HCT116 (cell line): ENCODE measurements at regions of chr5 and their contacts with region 1.

Region 1: GRCh38 chr5:175378444-175379028 is 65.4 kb downstream of the DRD1 start:
- DNase-seq: peak; percentile 98
- ATAC-seq: peak; percentile 91
- H3K4me3 ChIP-seq: peak overlapping the region in 1 of 2 experiments; percentile 29; a peak in 2 of 4 replicates
- H3K27ac ChIP-seq: peak overlapping the region; percentile 83
- H3K4me1 ChIP-seq: peaks cover 32 to 57% of the 10 kb centered on the region in 2 experiments
- H3K27me3 ChIP-seq: no peaks in the 10 kb centered on the region
- CTCF ChIP-seq: no peak
- POLR2A ChIP-seq: no peak
- RAD21 ChIP-seq: peak; percentile 51; the same call in 1 of the 2 replicates

Region 2: GRCh38 chr5:175123542-175123941 is 255.0 kb before region 1 on chr5:
- CTCF ChIA-PET with region 1: no interaction called
- POLR2A ChIA-PET with region 1: no interaction called
- RAD21 ChIA-PET with region 1: no interaction called
- intact Hi-C with region 1: loop called (anchors 2 kb)
- DNase-seq: peak; percentile 95
- ATAC-seq: peak; percentile 77
- H3K4me3 ChIP-seq: peak overlapping the region in 1 of 2 experiments; percentile 20; a peak in 2 of 4 replicates
- H3K27ac ChIP-seq: peak overlapping the region; percentile 99
- H3K4me1 ChIP-seq: peaks cover 47 to 56% of the 10 kb centered on the region in 2 experiments
- H3K27me3 ChIP-seq: no peaks in the 10 kb centered on the region
- CTCF ChIP-seq: no peak
- POLR2A ChIP-seq: no peak
- RAD21 ChIP-seq: peak; percentile 20; the same call in 1 of the 2 replicates

Region 3: GRCh38 chr5:175254155-175254554 is 124.4 kb before region 1 on chr5:
- CTCF ChIA-PET with region 1: no interaction called
- POLR2A ChIA-PET with region 1: no interaction called
- RAD21 ChIA-PET with region 1: no interaction called
- intact Hi-C with region 1: no loop called
- DNase-seq: no peak
- ATAC-seq: no peak
- H3K4me3 ChIP-seq: no peak overlapping the region
- H3K27ac ChIP-seq: no peak overlapping the region
- H3K4me1 ChIP-seq: peaks cover 13 to 29% of the 10 kb centered on the region in 2 experiments; a peak in 3 of 4 replicates
- H3K27me3 ChIP-seq: peaks cover 1% of the 10 kb centered on the region; the same call in 1 of the 2 replicates
- CTCF ChIP-seq: no peak
- POLR2A ChIP-seq: no peak
- RAD21 ChIP-seq: no peak